CD4-positive, alpha-beta memory T cell (primary cell): ENCODE measurements at regions of chr6 and their contacts with region 1.

Region 1: DNA sequence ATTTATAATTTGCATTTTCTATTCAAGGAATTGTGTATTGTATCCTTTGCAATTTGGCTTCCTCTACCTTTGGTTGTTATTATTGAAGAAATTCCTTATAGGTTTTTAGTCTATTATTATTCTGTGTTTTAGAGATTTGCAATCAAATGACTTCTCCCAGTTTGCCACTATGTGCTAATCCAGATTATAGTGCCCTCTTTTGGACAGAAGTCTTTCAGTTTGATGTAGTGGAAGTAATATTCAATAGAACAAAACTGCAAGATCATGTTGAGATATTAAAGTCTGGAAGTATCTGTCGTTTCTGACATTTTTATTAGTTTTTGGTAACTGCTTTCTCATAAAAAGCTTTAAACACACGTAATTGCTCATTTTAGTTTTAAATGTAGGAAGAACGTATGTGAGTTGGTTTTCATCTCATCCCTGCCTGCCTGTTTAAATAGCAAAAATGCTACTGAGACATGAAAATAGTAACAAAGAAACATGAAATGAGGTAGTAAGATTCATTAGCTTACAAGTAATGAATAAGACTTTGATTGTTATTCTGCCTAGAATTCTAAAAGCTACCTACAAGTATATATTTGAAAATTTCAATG is 72.8 kb downstream of the RTN4IP1 start:
- DNase-seq: peak in 4 of 5 donors; percentile 43 to 46 (median 45)
- H3K4me3 ChIP-seq: no peak overlapping the region
- H3K4me3 Mint-ChIP-seq: no peak overlapping the region
- H3K27ac ChIP-seq: no peak overlapping the region
- H3K27ac Mint-ChIP-seq: peak overlapping the region in 3 of 7 donors; percentile 2 to 75 (median 68)
- H3K4me1 ChIP-seq: no peaks in the 10 kb centered on the region
- H3K4me1 Mint-ChIP-seq: peaks cover 4 to 9% (median 7%) of the 10 kb centered on the region in 4 donors
- H3K27me3 ChIP-seq: no peaks in the 10 kb centered on the region
- H3K27me3 Mint-ChIP-seq: no peaks in the 10 kb centered on the region

Region 2: DNA sequence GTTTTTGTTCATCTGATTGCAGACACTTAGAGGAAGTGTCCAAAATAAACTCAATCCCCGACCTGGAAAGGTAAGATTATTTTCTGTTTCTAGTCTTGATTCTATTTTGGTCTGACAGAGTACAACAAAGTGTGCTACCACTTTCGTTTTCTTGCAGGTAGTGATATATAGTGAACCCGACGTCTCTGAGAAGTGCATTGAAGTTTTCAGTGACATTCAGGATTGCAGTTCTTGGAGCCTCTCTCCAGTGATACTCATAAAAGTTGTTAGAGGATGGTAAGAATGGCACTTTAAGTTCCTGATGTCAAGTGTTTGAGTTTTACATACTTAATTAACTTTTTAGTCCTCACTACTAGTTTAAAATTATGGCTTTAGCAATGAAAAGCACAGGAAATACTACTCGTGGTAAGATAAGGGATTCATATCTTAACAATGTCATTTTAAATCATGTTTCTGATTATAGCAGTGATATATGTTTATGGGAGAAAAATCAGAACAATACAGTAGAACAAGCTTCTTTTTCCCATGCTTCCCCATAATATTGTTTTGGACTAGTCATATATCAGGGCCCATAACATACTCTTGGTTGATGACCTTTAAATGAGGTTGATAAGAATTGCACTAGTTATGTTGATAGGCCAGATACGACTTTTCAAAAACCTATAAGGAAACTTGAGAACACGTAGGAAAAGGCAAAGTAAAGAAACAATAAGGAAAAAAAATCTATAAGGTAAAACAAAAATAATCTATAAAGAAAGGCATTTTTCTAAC is 31.2 kb before region 1 on chr6:
- CTCF ChIA-PET with region 1: interaction called, 10 read pairs
- POLR2A ChIA-PET with region 1: interaction called, 12 read pairs
- intact Hi-C with region 1: loop called (anchors 1 kb)
- DNase-seq: peak in 4 of 5 donors; percentile 49 to 57 (median 53)
- H3K4me3 ChIP-seq: peak overlapping the region; percentile 13 to 58
- H3K4me3 Mint-ChIP-seq: peak overlapping the region; percentile 85 to 97 (median 92)
- H3K27ac ChIP-seq: peak overlapping the region; percentile 79
- H3K27ac Mint-ChIP-seq: peak overlapping the region; percentile 86 to 96 (median 94)
- H3K4me1 ChIP-seq: peaks cover 58% of the 10 kb centered on the region
- H3K4me1 Mint-ChIP-seq: peaks cover 26 to 81% (median 40%) of the 10 kb centered on the region in 4 donors
- H3K27me3 ChIP-seq: no peaks in the 10 kb centered on the region
- H3K27me3 Mint-ChIP-seq: no peaks in the 10 kb centered on the region

Region 3: GRCh38 chr6:106539936-106540335 is 16.5 kb before region 1 on chr6:
- CTCF ChIA-PET with region 1: interaction called, 13 read pairs
- POLR2A ChIA-PET with region 1: interaction called, 3 read pairs
- intact Hi-C with region 1: no loop called
- DNase-seq: no peak
- H3K4me3 ChIP-seq: no peak overlapping the region
- H3K4me3 Mint-ChIP-seq: peak overlapping the region in 1 of 8 donors; percentile 4
- H3K27ac ChIP-seq: no peak overlapping the region
- H3K27ac Mint-ChIP-seq: peak overlapping the region in 6 of 7 donors; percentile 48 to 85 (median 78)
- H3K4me1 ChIP-seq: peaks cover 41% of the 10 kb centered on the region
- H3K4me1 Mint-ChIP-seq: peaks cover 41 to 58% (median 50%) of the 10 kb centered on the region in 4 donors
- H3K27me3 ChIP-seq: no peaks in the 10 kb centered on the region
- H3K27me3 Mint-ChIP-seq: no peaks in the 10 kb centered on the region